ENCODE measurements at regions of chr14 and their contacts with region 1.

Region 1: GRCh38 chr14:51202914-51203665 is 37.0 kb upstream of the TMX1 start:
- DNase-seq: peak; percentile 69
- ATAC-seq: peak; percentile 85
- H3K4me3 Mint-ChIP-seq: peak overlapping the region; percentile 54
- H3K27ac Mint-ChIP-seq: peak overlapping the region; percentile 42
- H3K4me1 Mint-ChIP-seq: peaks cover 38% of the 10 kb centered on the region
- H3K27me3 Mint-ChIP-seq: peaks cover 2% of the 10 kb centered on the region
- CTCF ChIP-seq: no peak

Region 2: GRCh38 chr14:50830932-50831725 is 372.0 kb before region 1 on chr14 and contains the start of gene NIN:
- CTCF ChIA-PET with region 1: no interaction called
- POLR2A ChIA-PET with region 1: interaction called, 4 read pairs
- intact Hi-C with region 1: loop called (anchors 5 kb)
- DNase-seq: peak; percentile 81
- ATAC-seq: peak; percentile 83
- H3K4me3 Mint-ChIP-seq: peak within 1 kb of the TSS; percentile 98
- H3K27ac Mint-ChIP-seq: peak within 1 kb of the TSS; percentile 98
- H3K4me1 Mint-ChIP-seq: peaks cover 72% of the 10 kb centered on the region
- H3K27me3 Mint-ChIP-seq: no peaks in the 10 kb centered on the region
- CTCF ChIP-seq: no peak
- total RNA-seq, gene NIN: 145 and 156 TPM in 2 replicates

Region 3: DNA sequence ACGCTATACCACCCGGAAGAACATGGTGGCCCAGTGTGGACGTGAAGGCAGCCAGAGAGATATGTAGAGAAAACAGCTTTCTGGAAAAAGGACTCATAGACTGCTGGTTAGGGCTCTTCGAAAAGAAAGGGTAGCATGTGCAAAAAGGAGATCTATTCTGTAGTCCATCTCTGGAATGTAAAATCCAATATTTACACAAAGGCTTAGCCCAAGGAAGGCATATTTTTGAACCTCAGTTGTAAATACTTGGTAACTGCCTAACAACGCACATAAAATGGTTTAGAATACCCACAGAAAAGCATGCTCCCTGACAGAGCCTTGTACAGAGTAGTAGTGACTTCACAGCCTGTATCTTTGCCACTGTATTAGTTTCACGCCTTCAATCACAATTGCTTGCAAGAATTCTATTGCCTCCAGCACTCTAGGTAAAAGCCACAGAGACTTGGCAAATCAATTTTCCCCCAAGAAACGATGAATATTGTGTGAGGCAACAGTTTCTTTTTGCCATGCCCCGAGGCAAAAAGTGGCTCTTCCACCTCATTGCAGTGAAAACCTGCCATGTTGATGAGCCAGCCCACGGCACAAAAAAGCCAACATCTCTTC is 167.4 kb before region 1 on chr14:
- CTCF ChIA-PET with region 1: no interaction called
- POLR2A ChIA-PET with region 1: no interaction called
- intact Hi-C with region 1: no loop called
- DNase-seq: no peak
- ATAC-seq: no peak
- H3K4me3 Mint-ChIP-seq: no peak overlapping the region
- H3K27ac Mint-ChIP-seq: no peak overlapping the region
- H3K4me1 Mint-ChIP-seq: peaks cover 8% of the 10 kb centered on the region
- H3K27me3 Mint-ChIP-seq: no peaks in the 10 kb centered on the region
- CTCF ChIP-seq: no peak

Region 4: DNA sequence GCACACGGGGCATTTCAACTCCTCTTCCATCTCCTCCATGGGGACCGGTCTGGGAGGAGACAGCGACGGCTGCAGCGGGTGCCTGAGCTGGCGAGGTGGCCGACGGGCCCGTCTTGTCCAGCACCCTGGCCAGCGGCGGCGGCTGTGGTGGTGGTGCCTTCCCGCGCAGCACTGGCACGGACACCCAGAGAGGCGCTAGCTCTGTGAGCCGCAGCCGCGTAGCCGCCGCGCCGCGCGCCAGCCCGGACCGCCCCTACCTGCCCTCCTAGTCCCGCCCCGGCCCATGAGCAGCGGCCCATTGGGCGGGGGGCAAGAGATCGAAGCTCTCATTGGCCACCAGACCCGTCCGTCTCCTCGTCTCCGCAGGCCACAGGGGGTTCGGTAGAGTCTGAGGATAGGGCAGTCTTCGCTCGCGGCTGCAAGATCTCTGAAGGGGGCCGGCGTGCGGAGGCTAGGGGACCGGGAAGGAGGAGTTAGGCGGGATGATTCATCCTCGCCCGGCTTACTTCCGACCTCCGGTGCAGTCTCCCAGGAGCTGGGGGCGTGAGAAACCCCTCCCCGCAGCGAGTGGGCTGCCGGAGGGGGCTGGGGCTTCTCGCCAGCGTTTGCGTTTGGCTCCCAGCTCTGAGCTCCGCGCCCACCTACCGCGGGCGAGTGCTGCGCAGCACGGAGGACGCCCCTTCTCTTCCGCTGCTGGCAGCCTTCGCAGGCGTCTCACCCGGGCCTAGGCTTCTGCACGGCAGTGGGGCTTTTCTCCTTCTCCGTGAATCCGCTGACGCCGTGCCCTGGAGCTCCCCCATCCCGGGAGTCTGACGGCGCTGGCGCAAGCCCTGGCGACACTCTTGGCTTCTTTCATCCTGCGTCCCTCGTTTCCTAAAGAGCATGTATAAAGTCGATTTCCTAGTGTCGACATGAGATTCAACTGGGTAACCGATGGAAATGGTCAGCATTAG is 107.9 kb before region 1 on chr14 and contains the start of gene TRIM9:
- CTCF ChIA-PET with region 1: interaction called, 9 read pairs
- POLR2A ChIA-PET with region 1: interaction called, 12 read pairs
- intact Hi-C with region 1: loop called (anchors 1 kb)
- DNase-seq: peak; percentile 88
- ATAC-seq: peak; percentile 98
- H3K4me3 Mint-ChIP-seq: peak within 1 kb of the TSS; percentile 91
- H3K27ac Mint-ChIP-seq: peak within 1 kb of the TSS; percentile 18
- H3K4me1 Mint-ChIP-seq: peaks cover 27% of the 10 kb centered on the region
- H3K27me3 Mint-ChIP-seq: peaks cover 26% of the 10 kb centered on the region
- CTCF ChIP-seq: no peak
- total RNA-seq, gene TRIM9: 0.24 and 0.67 TPM in 2 replicates

Region 5: DNA sequence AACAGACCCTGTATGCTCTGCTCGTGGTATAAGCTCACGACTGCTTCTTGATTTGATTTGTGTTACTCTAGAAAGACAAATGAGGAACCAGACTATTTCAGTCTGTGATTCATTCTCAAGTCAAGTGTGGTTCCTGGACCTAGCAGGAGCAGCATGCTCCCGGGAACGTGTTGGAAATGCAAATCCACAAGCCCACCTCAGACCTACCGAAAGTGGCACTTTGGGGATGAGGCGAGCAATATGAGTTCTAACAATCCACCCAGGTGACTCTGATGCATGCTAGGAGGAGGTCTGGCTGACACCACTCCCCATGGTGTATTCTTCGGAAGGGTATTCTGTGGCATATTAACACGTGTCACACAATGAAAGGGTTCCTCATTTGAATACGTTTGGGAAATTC is 22.5 kb before region 1 on chr14:
- CTCF ChIA-PET with region 1: interaction called, 3 read pairs
- POLR2A ChIA-PET with region 1: interaction called, 8 read pairs
- intact Hi-C with region 1: loop called (anchors 1 kb)
- DNase-seq: peak; percentile 20
- ATAC-seq: peak; percentile 88
- H3K4me3 Mint-ChIP-seq: peak overlapping the region; percentile 51
- H3K27ac Mint-ChIP-seq: peak overlapping the region; percentile 50
- H3K4me1 Mint-ChIP-seq: peaks cover 33% of the 10 kb centered on the region
- H3K27me3 Mint-ChIP-seq: no peaks in the 10 kb centered on the region
- CTCF ChIP-seq: no peak

Region 6: DNA sequence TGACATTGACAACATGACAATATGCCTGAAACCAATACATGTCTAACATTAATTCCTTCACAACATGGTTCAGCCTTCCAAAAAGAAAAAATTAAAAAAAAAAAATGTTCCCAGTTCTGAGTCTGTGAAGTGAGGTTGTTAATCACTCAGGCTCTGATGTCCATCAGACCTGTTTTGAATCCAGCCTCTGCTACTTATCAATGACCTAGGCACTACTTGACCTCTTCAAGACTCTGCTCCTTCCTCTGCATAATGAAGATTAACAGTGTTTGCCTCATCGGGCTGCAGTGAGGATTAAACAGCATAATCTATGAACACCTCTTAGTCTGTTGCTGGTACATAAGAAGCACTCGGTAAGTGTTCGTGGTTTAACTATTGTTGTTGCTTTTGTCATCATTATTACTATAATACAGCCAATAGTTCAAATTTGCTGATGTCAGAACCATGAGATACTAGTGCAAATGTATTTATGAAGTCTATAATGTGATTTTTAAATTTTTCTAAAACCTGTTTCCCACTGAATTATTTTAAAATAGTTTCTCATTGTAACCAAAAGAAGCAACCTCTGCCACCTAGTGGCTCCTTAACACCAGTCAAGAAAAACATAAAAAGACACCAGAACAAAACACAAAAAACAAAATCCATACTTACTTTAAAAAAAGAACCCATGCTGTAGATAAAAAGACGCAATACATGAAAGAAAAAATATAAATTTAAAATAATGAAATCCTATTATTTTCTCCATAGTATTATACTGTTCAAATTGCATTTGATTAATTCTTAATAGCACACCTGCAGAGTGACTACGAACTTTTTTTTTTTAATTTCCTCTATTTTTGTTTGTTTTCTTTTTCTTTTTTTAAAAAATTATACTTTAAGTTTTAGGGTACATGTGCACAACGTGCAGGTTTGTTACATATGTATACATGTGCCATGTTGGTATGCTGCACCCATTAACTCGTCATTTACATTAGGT is 16.7 kb after region 1 on chr14:
- CTCF ChIA-PET with region 1: interaction called, 17 read pairs
- POLR2A ChIA-PET with region 1: interaction called, 4 read pairs
- intact Hi-C with region 1: no loop called
- DNase-seq: no peak
- ATAC-seq: no peak
- H3K4me3 Mint-ChIP-seq: no peak overlapping the region
- H3K27ac Mint-ChIP-seq: no peak overlapping the region
- H3K4me1 Mint-ChIP-seq: no peaks in the 10 kb centered on the region
- H3K27me3 Mint-ChIP-seq: peaks cover 3% of the 10 kb centered on the region
- CTCF ChIP-seq: peak; percentile 35

Region 7: GRCh38 chr14:51651388-51652167 is 448.5 kb after region 1 on chr14 and contains the start of gene FRMD6:
- CTCF ChIA-PET with region 1: no interaction called
- POLR2A ChIA-PET with region 1: no interaction called
- intact Hi-C with region 1: loop called (anchors 1 kb)
- DNase-seq: peak; percentile 71
- ATAC-seq: peak; percentile 80
- H3K4me3 Mint-ChIP-seq: peak within 1 kb of the TSS; percentile 82
- H3K27ac Mint-ChIP-seq: peak within 1 kb of the TSS; percentile 35
- H3K4me1 Mint-ChIP-seq: peaks cover 8% of the 10 kb centered on the region
- H3K27me3 Mint-ChIP-seq: peaks cover 30% of the 10 kb centered on the region
- CTCF ChIP-seq: no peak
- total RNA-seq, gene FRMD6: 0.32 and 0.33 TPM in 2 replicates

Measured in activated B cell treated with CpG ODN at 0.5 μM for 24 hours (primary cell).